ENCODE measurements at regions of chr6 and their contacts with region 1.

Region 1: DNA sequence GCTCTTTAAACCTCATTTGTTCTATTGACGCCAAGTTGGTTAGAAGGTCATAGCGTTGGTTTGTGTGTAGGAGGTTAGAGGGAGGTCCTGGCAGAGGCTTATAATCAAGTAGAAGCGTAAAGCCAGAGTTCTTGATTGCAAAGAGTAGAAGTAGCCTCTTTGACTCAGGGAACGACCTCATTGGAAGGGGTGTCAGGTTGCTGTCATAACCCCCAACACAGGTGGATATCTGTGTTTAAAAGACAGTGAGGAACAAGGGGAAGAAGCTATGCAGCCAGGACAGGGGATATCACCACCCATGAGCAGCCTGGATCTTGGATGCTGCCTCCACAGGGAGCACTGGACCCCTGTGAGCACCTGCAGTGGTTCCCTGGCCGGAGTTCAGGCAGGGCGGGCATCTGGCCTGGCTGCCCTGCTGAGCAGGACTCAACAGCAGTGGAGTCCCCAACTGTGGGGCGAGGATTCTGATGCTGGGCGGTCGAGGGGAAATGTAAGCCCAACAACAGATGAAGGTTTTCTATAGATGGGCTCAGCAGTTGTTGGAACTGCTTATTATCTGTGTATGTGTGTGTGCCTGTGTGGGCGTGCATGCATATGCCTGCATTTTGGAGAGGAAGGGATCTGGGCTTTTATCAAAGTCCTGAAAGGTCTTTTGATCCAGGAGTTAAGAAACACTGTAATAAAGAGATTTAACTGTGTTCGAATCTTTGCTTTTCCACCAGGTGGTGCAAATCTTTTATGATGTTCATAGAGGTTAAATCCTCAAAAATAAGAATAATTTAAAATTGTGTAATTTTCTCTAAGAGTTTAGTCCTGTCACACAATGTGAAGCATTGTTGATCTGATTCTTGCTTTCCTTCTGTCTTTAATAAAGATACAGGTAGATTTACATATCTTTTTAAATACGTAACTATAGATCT is 27.7 kb downstream of the HIVEP1 start:
- DNase-seq: no peak
- ATAC-seq: no peak
- H3K4me3 ChIP-seq: no peak overlapping the region
- H3K4me3 Mint-ChIP-seq: no peak overlapping the region
- H3K27ac ChIP-seq: no peak overlapping the region
- H3K27ac Mint-ChIP-seq: peak overlapping the region; percentile 24
- H3K4me1 ChIP-seq: peaks cover 21% of the 10 kb centered on the region
- H3K4me1 Mint-ChIP-seq: peaks cover 70% of the 10 kb centered on the region
- H3K27me3 ChIP-seq: no peaks in the 10 kb centered on the region
- H3K27me3 Mint-ChIP-seq: no peaks in the 10 kb centered on the region
- CTCF ChIP-seq: no peak

Region 2: DNA sequence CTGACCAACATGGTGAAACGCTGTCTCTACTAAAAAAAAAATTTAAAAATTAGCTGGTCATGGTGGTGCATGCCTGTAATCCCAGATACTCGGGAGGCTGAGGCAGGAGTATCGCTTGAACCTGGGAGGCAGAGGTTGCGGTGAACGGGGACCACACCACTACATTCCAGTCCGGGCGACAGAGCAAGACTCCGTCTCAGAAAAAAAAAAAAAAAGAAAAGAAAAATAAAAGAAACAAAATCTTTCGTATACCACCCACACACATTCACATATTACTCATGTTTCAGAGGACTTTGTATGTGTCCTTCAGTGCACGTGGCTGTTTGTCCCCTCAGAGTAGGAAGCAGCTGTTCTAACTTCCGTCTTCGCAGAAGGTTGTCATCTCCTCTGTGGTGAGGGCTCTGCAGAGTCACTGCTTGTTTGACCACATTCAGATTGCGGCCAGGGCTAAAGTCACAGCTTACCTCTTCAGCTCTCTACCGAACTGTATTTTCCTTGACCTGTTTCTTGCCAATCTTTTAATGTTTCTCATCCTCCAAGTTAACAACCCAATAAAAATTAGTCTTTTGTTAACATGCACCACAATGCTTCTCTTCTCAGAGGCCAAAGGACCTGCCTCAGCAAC is 64.3 kb before region 1 on chr6:
- CTCF ChIA-PET with region 1: no interaction called
- POLR2A ChIA-PET with region 1: no interaction called
- intact Hi-C with region 1: loop called in 1 of 2 experiments (anchors 5 kb)
- DNase-seq: peak in 4 of 14 experiments; percentile 17 to 73 (median 55)
- ATAC-seq: no peak
- H3K4me3 ChIP-seq: no peak overlapping the region
- H3K4me3 Mint-ChIP-seq: no peak overlapping the region
- H3K27ac ChIP-seq: no peak overlapping the region
- H3K27ac Mint-ChIP-seq: no peak overlapping the region
- H3K4me1 ChIP-seq: peaks cover 3% of the 10 kb centered on the region
- H3K4me1 Mint-ChIP-seq: peaks cover 30% of the 10 kb centered on the region
- H3K27me3 ChIP-seq: no peaks in the 10 kb centered on the region
- H3K27me3 Mint-ChIP-seq: no peaks in the 10 kb centered on the region
- CTCF ChIP-seq: no peak

Region 3: GRCh38 chr6:12289933-12290820 is 250.4 kb after region 1 on chr6 and contains the start of gene EDN1:
- CTCF ChIA-PET with region 1: no interaction called
- POLR2A ChIA-PET with region 1: no interaction called
- intact Hi-C with region 1: no loop called
- DNase-seq: peak in 13 of 14 experiments; percentile 9 to 67 (median 30)
- ATAC-seq: peak; percentile 82
- H3K4me3 ChIP-seq: peak within 1 kb of the TSS; percentile 49
- H3K4me3 Mint-ChIP-seq: peak within 1 kb of the TSS; percentile 89
- H3K27ac ChIP-seq: no peak within 1 kb of the TSS
- H3K27ac Mint-ChIP-seq: no peak within 1 kb of the TSS
- H3K4me1 ChIP-seq: peaks cover 12% of the 10 kb centered on the region
- H3K4me1 Mint-ChIP-seq: peaks cover 20% of the 10 kb centered on the region
- H3K27me3 ChIP-seq: peaks cover 26 to 34% of the 10 kb centered on the region in 2 experiments
- H3K27me3 Mint-ChIP-seq: peaks cover 57% of the 10 kb centered on the region
- CTCF ChIP-seq: peak; percentile 9
- total RNA-seq, gene EDN1: 0.80 to 1.1 TPM